ENCODE measurements at regions of chr3 and their contacts with region 1.

Region 1: GRCh38 chr3:182967218-182968204 is 12.8 kb downstream of the DCUN1D1 start:
- DNase-seq: no peak
- ATAC-seq: peak; percentile 77
- H3K4me3 Mint-ChIP-seq: peak overlapping the region; percentile 32
- H3K27ac Mint-ChIP-seq: peak overlapping the region; percentile 71
- H3K4me1 Mint-ChIP-seq: peaks cover 54% of the 10 kb centered on the region
- H3K27me3 Mint-ChIP-seq: no peaks in the 10 kb centered on the region
- CTCF ChIP-seq: no peak

Region 2: DNA sequence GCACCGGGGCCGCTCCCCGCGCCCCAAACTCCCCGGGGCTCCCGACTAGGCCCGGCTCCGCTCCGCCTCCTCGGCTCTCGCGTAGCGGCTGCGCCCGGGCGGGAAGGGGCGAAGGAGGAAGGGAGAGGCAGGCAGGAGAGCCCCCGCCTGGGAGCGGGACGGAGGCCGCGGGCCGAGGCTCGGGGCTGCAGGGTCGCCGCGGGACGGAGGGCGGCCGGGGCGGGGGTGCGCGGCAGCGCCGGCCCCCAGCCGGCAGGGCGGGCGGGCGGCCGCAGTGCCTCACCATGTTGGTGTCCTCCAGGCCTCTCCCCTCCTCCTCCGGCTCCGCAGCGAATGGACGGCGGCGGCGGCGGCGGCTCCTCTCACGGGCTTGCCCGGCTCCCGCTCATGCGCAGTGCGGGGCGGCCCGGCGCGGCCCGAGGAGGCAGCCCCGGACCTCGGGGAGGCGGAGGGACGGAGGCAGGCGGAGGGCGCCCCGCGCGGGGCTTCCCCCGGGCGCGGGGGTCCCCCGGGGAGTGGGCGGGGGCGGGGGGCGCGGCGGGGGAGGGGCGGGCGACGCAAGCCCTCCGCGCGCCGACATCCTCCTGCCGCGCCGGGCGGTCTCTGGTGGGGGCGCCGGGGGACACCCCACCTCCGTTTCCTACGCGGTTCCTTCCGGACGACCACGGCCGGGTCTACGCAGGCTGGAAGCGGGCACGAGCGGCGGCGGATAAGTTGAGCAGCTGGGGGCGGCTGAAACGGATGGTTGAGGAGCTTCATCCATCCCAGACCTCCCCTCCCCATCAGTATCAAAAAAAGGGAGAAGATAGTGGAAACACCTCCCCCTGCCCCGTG is 12.9 kb after region 1 on chr3 and contains the start of gene DCUN1D1:
- CTCF ChIA-PET with region 1: no interaction called
- POLR2A ChIA-PET with region 1: interaction called, 6 read pairs
- intact Hi-C with region 1: loop called (anchors 1 kb)
- DNase-seq: peak; percentile 90
- ATAC-seq: peak; percentile 89
- H3K4me3 Mint-ChIP-seq: peak within 1 kb of the TSS; percentile 93
- H3K27ac Mint-ChIP-seq: peak within 1 kb of the TSS; percentile 84
- H3K4me1 Mint-ChIP-seq: peaks cover 33% of the 10 kb centered on the region
- H3K27me3 Mint-ChIP-seq: no peaks in the 10 kb centered on the region
- CTCF ChIP-seq: no peak
- total RNA-seq, gene DCUN1D1: 36.7 and 44.2 TPM in 2 replicates

Measured in activated B cell treated with CpG ODN at 0.5 μM for 24 hours (primary cell).